ENCODE measurements at regions of chr6 and their contacts with region 1.

Region 1: GRCh38 chr6:73653571-73654424 is at the start of gene SLC17A5:
- DNase-seq: peak; percentile 92
- H3K4me3 Mint-ChIP-seq: peak within 1 kb of the TSS; percentile 97
- H3K27ac Mint-ChIP-seq: peak within 1 kb of the TSS; percentile 86
- H3K4me1 Mint-ChIP-seq: peaks cover 18% of the 10 kb centered on the region
- H3K27me3 Mint-ChIP-seq: no peaks in the 10 kb centered on the region
- total RNA-seq, gene SLC17A5: 1.7 to 2.0 TPM

Region 2: GRCh38 chr6:73388800-73389512 is 264.8 kb before region 1 on chr6:
- CTCF ChIA-PET with region 1: interaction called, 4 read pairs
- intact Hi-C with region 1: loop called (anchors 1 kb)
- DNase-seq: peak; percentile 64
- H3K4me3 Mint-ChIP-seq: peak overlapping the region; percentile 73
- H3K27ac Mint-ChIP-seq: no peak overlapping the region
- H3K4me1 Mint-ChIP-seq: peaks cover 4% of the 10 kb centered on the region
- H3K27me3 Mint-ChIP-seq: peaks cover 3% of the 10 kb centered on the region

Region 3: GRCh38 chr6:73515204-73515655 is 138.6 kb before region 1 on chr6:
- CTCF ChIA-PET with region 1: interaction called, 5 read pairs
- intact Hi-C with region 1: loop called (anchors 1 kb)
- DNase-seq: no peak
- H3K4me3 Mint-ChIP-seq: peak overlapping the region; percentile 4
- H3K27ac Mint-ChIP-seq: peak overlapping the region; percentile 83
- H3K4me1 Mint-ChIP-seq: peaks cover 24% of the 10 kb centered on the region
- H3K27me3 Mint-ChIP-seq: peaks cover 4% of the 10 kb centered on the region

Region 4: GRCh38 chr6:73585566-73586415 is 68.0 kb before region 1 on chr6:
- CTCF ChIA-PET with region 1: interaction called, 5 read pairs
- intact Hi-C with region 1: loop called (anchors 1 kb)
- DNase-seq: peak; percentile 70
- H3K4me3 Mint-ChIP-seq: peak overlapping the region; percentile 78
- H3K27ac Mint-ChIP-seq: peak overlapping the region; percentile 99
- H3K4me1 Mint-ChIP-seq: peaks cover 36% of the 10 kb centered on the region
- H3K27me3 Mint-ChIP-seq: no peaks in the 10 kb centered on the region

Region 5: DNA sequence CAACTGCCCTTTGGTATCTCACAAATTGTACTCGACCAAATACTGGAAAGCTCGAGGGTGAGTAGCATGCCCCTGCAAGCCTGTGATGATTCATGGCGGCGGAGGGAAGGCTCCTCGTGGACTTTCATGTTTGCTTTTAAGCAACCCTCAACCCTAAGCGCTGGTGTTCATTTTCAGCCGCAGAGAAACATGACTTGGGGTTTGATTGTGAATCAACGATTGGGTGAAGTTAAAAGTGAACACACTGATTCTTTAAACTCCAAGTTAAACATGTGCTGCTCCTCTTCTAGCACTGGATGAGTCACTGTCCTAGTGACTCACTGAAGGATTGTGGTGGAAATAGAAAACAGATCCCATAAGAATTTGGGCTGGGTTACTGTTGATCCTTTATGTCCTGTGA is 50.5 kb after region 1 on chr6:
- CTCF ChIA-PET with region 1: no interaction called
- intact Hi-C with region 1: no loop called
- DNase-seq: peak; percentile 45
- H3K4me3 Mint-ChIP-seq: no peak overlapping the region
- H3K27ac Mint-ChIP-seq: no peak overlapping the region
- H3K4me1 Mint-ChIP-seq: peaks cover 18% of the 10 kb centered on the region
- H3K27me3 Mint-ChIP-seq: peaks cover 2% of the 10 kb centered on the region

Region 6: DNA sequence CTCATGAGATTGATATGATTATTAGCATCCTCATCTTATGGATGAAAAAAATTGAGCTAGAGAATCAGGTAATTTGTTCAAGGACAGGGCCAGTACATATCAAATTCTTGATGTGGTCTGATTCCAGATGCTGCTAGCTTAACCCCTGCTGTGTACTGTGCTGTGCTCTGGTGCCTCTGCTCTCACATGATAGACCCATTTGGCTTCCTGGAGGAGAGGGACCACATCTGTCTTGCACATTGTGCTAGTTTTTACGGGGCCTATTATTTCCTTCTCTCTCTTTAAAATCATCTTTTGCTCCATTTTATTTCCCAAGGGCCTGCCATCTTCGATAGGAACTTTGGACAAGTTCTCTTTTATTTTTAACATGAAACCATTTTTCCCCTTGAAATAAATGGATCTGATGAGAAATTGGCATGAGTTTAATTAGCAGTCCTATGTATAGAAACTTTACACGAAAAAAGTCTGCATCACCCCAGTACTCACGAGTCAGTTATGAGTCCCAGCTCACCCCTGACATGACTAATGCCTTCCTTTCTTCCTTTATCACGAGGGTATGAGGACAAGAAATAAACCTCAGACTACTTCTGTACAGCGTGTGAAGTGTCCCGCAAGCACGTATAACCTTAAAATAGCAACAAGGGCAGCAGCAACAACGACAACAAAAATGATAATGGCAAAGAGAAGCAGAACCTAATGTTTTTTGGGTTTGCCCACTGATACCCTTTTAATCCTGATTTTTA is 68.7 kb after region 1 on chr6:
- CTCF ChIA-PET with region 1: no interaction called
- intact Hi-C with region 1: loop called (anchors 2 kb)
- DNase-seq: peak; percentile 55
- H3K4me3 Mint-ChIP-seq: no peak overlapping the region
- H3K27ac Mint-ChIP-seq: peak overlapping the region; percentile 15
- H3K4me1 Mint-ChIP-seq: peaks cover 27% of the 10 kb centered on the region
- H3K27me3 Mint-ChIP-seq: no peaks in the 10 kb centered on the region

Region 7: GRCh38 chr6:75284632-75285286 is 1631.0 kb after region 1 on chr6 and contains the start of gene TMEM30A:
- CTCF ChIA-PET with region 1: no interaction called
- intact Hi-C with region 1: loop called (anchors 1 kb)
- DNase-seq: peak; percentile 97
- H3K4me3 Mint-ChIP-seq: no peak within 1 kb of the TSS
- H3K27ac Mint-ChIP-seq: no peak within 1 kb of the TSS
- H3K4me1 Mint-ChIP-seq: peaks cover 44% of the 10 kb centered on the region
- H3K27me3 Mint-ChIP-seq: no peaks in the 10 kb centered on the region
- total RNA-seq, gene TMEM30A: 68.9 to 76.0 TPM